Heart right ventricle (tissue), 16 donors: ENCODE measurements at regions of chr15 and their contacts with region 1.

Region 1: GRCh38 chr15:100341662-100342560 is at the start of gene ADAMTS17:
- DNase-seq: peak; percentile 94 to 96
- ATAC-seq: peak; percentile 98 to 100 (median 99)
- H3K4me3 ChIP-seq: peak within 1 kb of the TSS; percentile 55 to 86 (median 72)
- H3K27ac ChIP-seq: peak within 1 kb of the TSS in 7 of 10 donors; percentile 39 to 78 (median 45)
- H3K4me1 ChIP-seq: peaks cover 0 to 14% (median 7%) of the 10 kb centered on the region in 9 donors
- H3K27me3 ChIP-seq: peaks cover 0 to 45% (median 13%) of the 10 kb centered on the region in 7 donors
- CTCF ChIP-seq: peak; percentile 83 to 98 (median 95)
- total RNA-seq, gene ADAMTS17: 0.47 to 5.0 (median 1.3) TPM

Region 2: GRCh38 chr15:99568625-99569352 is 773.1 kb before region 1 on chr15:
- intact Hi-C with region 1: no loop called
- DNase-seq: no peak
- ATAC-seq: no peak
- H3K4me3 ChIP-seq: peak overlapping the region in 8 of 10 donors; percentile 2 to 91 (median 81)
- H3K27ac ChIP-seq: peak overlapping the region in 8 of 10 donors; percentile 55 to 100 (median 98)
- H3K4me1 ChIP-seq: peaks cover 6 to 74% (median 67%) of the 10 kb centered on the region in 9 donors
- H3K27me3 ChIP-seq: no peaks in the 10 kb centered on the region
- CTCF ChIP-seq: no peak

Region 3: GRCh38 chr15:99921101-99921500 is 420.8 kb before region 1 on chr15:
- intact Hi-C with region 1: loop called in 2 of 10 experiments (anchors 5 to 10 kb)
- DNase-seq: no peak
- ATAC-seq: no peak
- H3K4me3 ChIP-seq: no peak overlapping the region
- H3K27ac ChIP-seq: no peak overlapping the region
- H3K4me1 ChIP-seq: peaks cover 0 to 23% (median 13%) of the 10 kb centered on the region in 9 donors
- H3K27me3 ChIP-seq: peaks cover 0 to 21% (median 11%) of the 10 kb centered on the region in 7 donors
- CTCF ChIP-seq: no peak

Region 4: DNA sequence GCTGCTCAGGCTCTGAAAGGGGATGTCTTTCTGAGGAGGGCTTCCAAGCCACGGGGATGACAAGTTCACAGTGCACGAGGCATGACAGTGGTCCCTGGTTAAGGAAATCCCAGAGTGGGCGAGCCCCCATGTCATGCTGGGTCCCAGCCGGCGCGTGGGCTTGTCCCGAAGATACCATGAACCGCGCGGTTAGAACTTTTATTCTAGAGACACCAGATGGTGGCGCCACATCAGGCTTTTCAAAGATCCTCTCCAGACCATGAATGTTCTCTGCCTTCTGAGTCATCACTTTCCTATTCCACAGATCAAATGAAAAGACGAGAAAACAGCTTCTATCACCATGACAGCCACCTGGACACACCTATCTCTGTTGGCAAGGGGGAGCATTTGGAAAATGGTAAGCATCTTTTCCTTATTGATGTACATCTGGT is 380.9 kb before region 1 on chr15:
- intact Hi-C with region 1: loop called in 6 of 10 experiments (anchors 10 kb)
- DNase-seq: peak in 1 of 2 donors; percentile 22
- ATAC-seq: peak; percentile 40 to 81 (median 66)
- H3K4me3 ChIP-seq: no peak overlapping the region
- H3K27ac ChIP-seq: no peak overlapping the region
- H3K4me1 ChIP-seq: no peaks in the 10 kb centered on the region
- H3K27me3 ChIP-seq: peaks cover 0 to 20% (median 4%) of the 10 kb centered on the region in 7 donors
- CTCF ChIP-seq: peak in 7 of 9 donors; percentile 40 to 64 (median 56)

Region 5: DNA sequence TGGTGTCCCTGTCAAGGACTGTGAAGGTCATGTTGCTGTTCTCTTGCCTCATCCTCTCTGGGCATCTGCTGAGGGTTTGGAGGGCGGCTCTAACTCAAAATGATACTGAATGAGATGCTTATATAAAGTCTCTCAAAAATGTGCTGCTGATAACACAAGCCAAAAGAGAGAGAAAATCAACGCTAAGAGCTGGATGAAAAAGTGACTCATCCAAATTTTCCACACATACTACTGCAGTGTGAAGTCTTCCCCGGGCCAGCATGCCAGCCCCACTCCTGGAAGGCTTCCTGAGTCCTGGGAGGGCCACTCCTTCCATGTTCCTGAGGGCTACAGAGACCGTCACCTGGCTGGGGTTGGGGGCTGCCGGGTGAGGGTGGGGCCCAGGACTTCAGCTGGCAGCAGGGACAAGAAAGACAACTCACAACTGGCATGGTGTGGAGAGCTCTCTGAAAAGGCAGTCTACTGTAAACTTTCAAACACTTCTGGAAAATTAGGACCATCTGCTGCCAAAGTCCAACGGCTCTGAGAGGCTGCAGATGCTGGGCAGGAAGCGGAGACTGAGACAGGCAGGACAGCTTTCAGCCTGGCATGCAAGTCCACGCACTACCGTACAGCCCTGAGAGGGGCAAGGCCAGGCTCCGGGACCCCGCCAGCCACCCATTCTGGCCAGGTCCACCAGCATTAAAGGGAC is 200.5 kb before region 1 on chr15:
- intact Hi-C with region 1: loop called in 1 of 10 experiments (anchors 10 kb)
- DNase-seq: no peak
- ATAC-seq: peak in 3 of 8 donors; percentile 30 to 73 (median 44)
- H3K4me3 ChIP-seq: no peak overlapping the region
- H3K27ac ChIP-seq: no peak overlapping the region
- H3K4me1 ChIP-seq: peaks cover 0 to 8% (median 0%) of the 10 kb centered on the region in 9 donors
- H3K27me3 ChIP-seq: no peaks in the 10 kb centered on the region
- CTCF ChIP-seq: no peak

Region 6: DNA sequence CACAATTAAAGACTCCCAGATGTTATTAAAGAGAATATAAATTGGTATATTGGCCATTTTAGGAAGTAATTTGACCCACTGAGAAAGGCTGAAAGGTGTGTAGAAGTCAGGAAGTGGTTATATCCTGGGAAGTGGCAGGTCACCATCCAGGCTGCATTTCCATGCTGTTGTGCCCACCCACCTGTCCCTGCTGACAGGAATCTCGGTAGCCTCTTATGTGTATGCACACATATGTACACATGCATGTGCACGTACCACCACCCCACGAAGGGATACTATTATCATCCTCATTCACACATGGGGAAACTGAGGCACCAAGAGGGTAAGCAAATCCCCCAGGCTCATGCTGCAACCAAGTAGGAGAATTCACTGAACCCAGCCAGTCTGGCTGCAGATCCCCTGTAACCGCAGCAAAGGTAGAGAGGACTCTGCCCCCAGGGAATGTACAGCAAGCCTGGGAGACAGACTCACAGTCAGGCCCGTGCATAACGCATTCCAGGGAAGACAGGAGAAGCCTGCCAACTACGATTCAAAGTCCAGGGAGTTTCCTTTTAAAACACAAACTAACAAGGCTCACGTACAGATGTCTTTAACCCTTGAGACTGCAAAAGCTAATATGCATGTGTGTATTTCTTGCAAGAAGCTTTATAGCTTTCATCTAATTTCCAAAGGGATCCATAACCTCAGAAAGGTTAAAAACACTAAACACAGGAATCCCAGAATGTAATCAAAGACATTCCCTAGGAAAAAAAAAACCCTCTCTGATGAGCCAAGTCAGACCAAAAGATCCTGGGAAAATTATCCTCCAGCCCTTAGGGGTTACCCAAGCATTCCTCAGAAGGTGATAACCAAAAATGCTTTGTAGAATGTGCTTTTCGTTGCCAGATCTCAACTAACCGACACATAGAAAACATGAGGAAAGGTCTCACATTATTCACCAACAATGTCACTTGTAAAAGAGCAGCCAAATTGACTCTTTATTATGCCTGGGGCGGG is 129.8 kb before region 1 on chr15:
- intact Hi-C with region 1: loop called in 2 of 10 experiments (anchors 10 kb)
- DNase-seq: no peak
- ATAC-seq: no peak
- H3K4me3 ChIP-seq: no peak overlapping the region
- H3K27ac ChIP-seq: no peak overlapping the region
- H3K4me1 ChIP-seq: peaks cover 0 to 21% (median 13%) of the 10 kb centered on the region in 9 donors
- H3K27me3 ChIP-seq: no peaks in the 10 kb centered on the region
- CTCF ChIP-seq: no peak

Region 7: GRCh38 chr15:100572362-100572983 is 230.6 kb after region 1 on chr15:
- intact Hi-C with region 1: loop called in 2 of 10 experiments (anchors 5 kb)
- DNase-seq: no peak
- ATAC-seq: no peak
- H3K4me3 ChIP-seq: no peak overlapping the region
- H3K27ac ChIP-seq: no peak overlapping the region
- H3K4me1 ChIP-seq: peaks cover 0 to 4% (median 0%) of the 10 kb centered on the region in 9 donors
- H3K27me3 ChIP-seq: no peaks in the 10 kb centered on the region
- CTCF ChIP-seq: peak; percentile 35 to 72 (median 67)